ENCODE measurements at regions of chr2 and their contacts with region 1.

Region 1: DNA sequence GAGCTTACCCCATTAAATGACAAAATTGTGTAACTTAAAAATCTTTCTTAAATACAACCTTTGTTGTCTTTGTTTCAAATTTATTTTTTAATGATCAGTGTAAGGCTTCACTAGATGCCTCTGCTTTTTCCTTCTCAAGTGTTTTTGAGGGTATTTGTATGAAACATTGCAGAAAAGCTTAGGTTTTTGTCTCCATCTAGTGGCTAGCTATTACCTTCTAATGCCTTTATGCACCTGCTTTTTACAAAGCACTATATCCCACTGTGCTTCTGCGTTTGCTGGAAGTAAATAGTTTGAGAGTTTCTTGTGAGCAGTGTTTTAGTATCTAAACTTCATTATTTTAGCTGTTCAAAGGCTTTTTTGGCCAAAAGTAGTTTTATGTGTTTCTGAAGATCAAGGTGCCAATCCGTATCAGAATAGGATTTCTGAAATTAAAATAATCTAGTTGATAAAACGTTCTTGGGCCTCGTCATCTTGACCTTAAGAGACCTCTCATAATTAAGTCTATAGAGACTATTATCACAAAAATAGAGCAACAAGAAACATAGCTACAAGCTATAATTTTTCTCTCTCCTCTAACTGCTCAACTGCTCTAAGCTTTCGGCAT is 47.0 kb downstream of the IWS1 start:
- DNase-seq: peak; percentile 75 to 87 (median 81)
- H3K4me3 ChIP-seq: no peak overlapping the region
- H3K27ac ChIP-seq: no peak overlapping the region
- H3K4me1 ChIP-seq: peaks cover 0 to 5% (median under 1%) of the 10 kb centered on the region in 4 experiments
- H3K27me3 ChIP-seq: no peaks in the 10 kb centered on the region

Region 2: GRCh38 chr2:127330753-127331152 is 148.6 kb before region 1 on chr2:
- CTCF ChIA-PET with region 1: interaction called, 24 read pairs
- POLR2A ChIA-PET with region 1: no interaction called
- DNase-seq: no peak
- H3K4me3 ChIP-seq: no peak overlapping the region
- H3K27ac ChIP-seq: no peak overlapping the region
- H3K4me1 ChIP-seq: no peaks in the 10 kb centered on the region
- H3K27me3 ChIP-seq: no peaks in the 10 kb centered on the region

Region 3: GRCh38 chr2:127355386-127356008 is 123.8 kb before region 1 on chr2:
- CTCF ChIA-PET with region 1: interaction called, 12 read pairs
- POLR2A ChIA-PET with region 1: no interaction called
- DNase-seq: peak; percentile 57 to 73 (median 73)
- H3K4me3 ChIP-seq: no peak overlapping the region
- H3K27ac ChIP-seq: no peak overlapping the region
- H3K4me1 ChIP-seq: no peaks in the 10 kb centered on the region
- H3K27me3 ChIP-seq: no peaks in the 10 kb centered on the region

Region 4: GRCh38 chr2:127422810-127423475 is 56.4 kb before region 1 on chr2:
- CTCF ChIA-PET with region 1: interaction called, 11 read pairs
- POLR2A ChIA-PET with region 1: no interaction called
- DNase-seq: peak; percentile 63 to 92 (median 82)
- H3K4me3 ChIP-seq: peak overlapping the region; percentile 13 to 77 (median 59)
- H3K27ac ChIP-seq: no peak overlapping the region
- H3K4me1 ChIP-seq: peaks cover 0 to 23% (median 17%) of the 10 kb centered on the region in 4 experiments
- H3K27me3 ChIP-seq: peaks cover 0 to 24% (median 0%) of the 10 kb centered on the region in 5 experiments

Region 5: GRCh38 chr2:127615501-127616166 is 136.3 kb after region 1 on chr2:
- CTCF ChIA-PET with region 1: no interaction called
- POLR2A ChIA-PET with region 1: no interaction called
- DNase-seq: peak; percentile 36 to 82 (median 63)
- H3K4me3 ChIP-seq: peak overlapping the region in 1 of 7 experiments; percentile 48
- H3K27ac ChIP-seq: peak overlapping the region in 1 of 2 experiments; percentile 3
- H3K4me1 ChIP-seq: peaks cover 0 to 39% (median 25%) of the 10 kb centered on the region in 4 experiments
- H3K27me3 ChIP-seq: no peaks in the 10 kb centered on the region

Region 6: DNA sequence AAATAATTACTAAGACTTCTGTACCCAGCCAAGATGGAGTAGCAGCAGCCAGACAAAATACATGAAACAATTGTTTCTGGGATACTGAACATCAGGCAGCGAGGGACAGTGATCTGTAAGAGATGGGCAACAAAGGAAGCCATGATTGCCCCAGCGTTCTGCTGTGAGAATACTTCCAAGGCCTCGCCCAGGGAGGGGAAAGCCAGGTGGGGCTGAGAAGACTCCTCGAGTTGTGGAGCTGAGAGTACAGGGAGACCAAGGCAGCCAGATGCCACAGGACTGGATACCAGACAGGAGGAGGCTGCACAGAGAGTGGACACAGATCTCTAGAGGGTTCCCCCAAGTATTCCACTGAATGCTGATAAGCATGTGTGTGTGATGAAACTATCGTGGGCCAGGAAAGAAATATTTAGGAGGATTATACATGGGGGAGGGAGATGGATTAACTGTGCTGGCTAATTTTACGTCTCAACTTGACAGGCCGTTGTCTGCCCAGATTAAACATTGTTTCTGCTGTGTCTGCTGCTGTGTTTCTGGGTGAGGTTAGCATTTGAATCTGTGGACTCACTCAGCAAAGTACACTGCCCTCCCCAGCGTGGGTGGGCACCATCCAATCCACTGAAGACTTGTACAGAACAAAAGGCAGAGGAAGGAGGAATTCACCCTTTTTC is 206.2 kb after region 1 on chr2:
- CTCF ChIA-PET with region 1: no interaction called
- POLR2A ChIA-PET with region 1: no interaction called
- DNase-seq: no peak
- H3K4me3 ChIP-seq: no peak overlapping the region
- H3K27ac ChIP-seq: no peak overlapping the region
- H3K4me1 ChIP-seq: peaks cover 0 to 4% (median 1%) of the 10 kb centered on the region in 4 experiments
- H3K27me3 ChIP-seq: no peaks in the 10 kb centered on the region